CD14-positive monocyte (primary cell): ENCODE measurements at regions of chr21 and their contacts with region 1.

Region 1: GRCh38 chr21:37366482-37367316 is at the start of gene DYRK1A:
- DNase-seq: peak; percentile 97 to 100 (median 99)
- H3K4me3 ChIP-seq: peak within 1 kb of the TSS; percentile 84 to 98 (median 95)
- H3K4me3 Mint-ChIP-seq: peak within 1 kb of the TSS; percentile 97 to 100
- H3K27ac ChIP-seq: peak within 1 kb of the TSS; percentile 93 to 97
- H3K27ac Mint-ChIP-seq: peak within 1 kb of the TSS; percentile 98 to 100 (median 100)
- H3K4me1 ChIP-seq: peaks cover 34 to 46% of the 10 kb centered on the region in 2 donors
- H3K4me1 Mint-ChIP-seq: peaks cover 42% of the 10 kb centered on the region
- H3K27me3 ChIP-seq: no peaks in the 10 kb centered on the region
- H3K27me3 Mint-ChIP-seq: peaks cover 0 to 2% (median 0%) of the 10 kb centered on the region in 3 donors
- CTCF ChIP-seq: no peak
- polyA plus RNA-seq, gene DYRK1A: 1.8 to 53.5 (median 2.4) TPM

Region 2: GRCh38 chr21:37072988-37073416 is 293.7 kb before region 1 on chr21 and contains the starts of genes PIGP and TTC3:
- intact Hi-C with region 1: loop called in 1 of 2 experiments (anchors 10 kb)
- DNase-seq: peak; percentile 94 to 95 (median 94)
- H3K4me3 ChIP-seq: peak within 1 kb of the TSS; percentile 85 to 91 (median 89)
- H3K4me3 Mint-ChIP-seq: peak within 1 kb of the TSS; percentile 95 to 97
- H3K27ac ChIP-seq: peak within 1 kb of the TSS; percentile 92 to 95
- H3K27ac Mint-ChIP-seq: peak within 1 kb of the TSS; percentile 89 to 95 (median 94)
- H3K4me1 ChIP-seq: peaks cover 18 to 39% of the 10 kb centered on the region in 2 donors
- H3K4me1 Mint-ChIP-seq: peaks cover 30% of the 10 kb centered on the region
- H3K27me3 ChIP-seq: no peaks in the 10 kb centered on the region
- H3K27me3 Mint-ChIP-seq: peaks cover 0 to 4% (median 0%) of the 10 kb centered on the region in 3 donors
- CTCF ChIP-seq: no peak
- polyA plus RNA-seq, gene PIGP: 8.8 to 17.6 (median 10.6) TPM
- polyA plus RNA-seq, gene TTC3: 9.6 to 35.4 (median 17.9) TPM

Region 3: GRCh38 chr21:37292941-37293340 is 73.8 kb before region 1 on chr21:
- intact Hi-C with region 1: no loop called
- DNase-seq: no peak
- H3K4me3 ChIP-seq: no peak overlapping the region
- H3K4me3 Mint-ChIP-seq: no peak overlapping the region
- H3K27ac ChIP-seq: no peak overlapping the region
- H3K27ac Mint-ChIP-seq: no peak overlapping the region
- H3K4me1 ChIP-seq: no peaks in the 10 kb centered on the region
- H3K4me1 Mint-ChIP-seq: no peaks in the 10 kb centered on the region
- H3K27me3 ChIP-seq: no peaks in the 10 kb centered on the region
- H3K27me3 Mint-ChIP-seq: peaks cover 0 to 8% (median 3%) of the 10 kb centered on the region in 3 donors
- CTCF ChIP-seq: no peak

Region 4: DNA sequence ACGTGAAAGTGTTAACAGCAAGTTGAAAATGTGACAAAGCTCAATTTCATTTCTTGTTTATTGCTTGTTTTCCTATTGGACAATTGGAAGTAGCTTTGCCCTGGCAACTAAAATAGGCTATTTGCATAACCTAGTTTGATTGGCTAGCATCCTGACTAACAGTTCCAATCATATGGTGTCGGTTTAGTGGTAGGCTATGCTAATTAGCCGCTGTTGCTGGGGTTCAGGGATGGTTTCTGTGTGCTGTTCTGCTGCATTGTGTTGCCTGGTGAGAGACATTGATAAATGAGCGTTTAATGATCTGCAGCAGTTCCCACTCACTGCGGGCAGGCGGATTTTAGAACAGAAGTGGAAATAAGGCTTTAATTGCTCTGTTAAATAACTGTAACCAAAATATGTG is 68.4 kb after region 1 on chr21:
- intact Hi-C with region 1: loop called (anchors 5 to 10 kb)
- DNase-seq: peak; percentile 82 to 96 (median 89)
- H3K4me3 ChIP-seq: peak overlapping the region; percentile 9 to 41 (median 12)
- H3K4me3 Mint-ChIP-seq: no peak overlapping the region
- H3K27ac ChIP-seq: peak overlapping the region in 1 of 2 donors; percentile 56
- H3K27ac Mint-ChIP-seq: no peak overlapping the region
- H3K4me1 ChIP-seq: peaks cover 8 to 16% of the 10 kb centered on the region in 2 donors
- H3K4me1 Mint-ChIP-seq: peaks cover 19% of the 10 kb centered on the region
- H3K27me3 ChIP-seq: no peaks in the 10 kb centered on the region
- H3K27me3 Mint-ChIP-seq: no peaks in the 10 kb centered on the region
- CTCF ChIP-seq: no peak

Region 5: DNA sequence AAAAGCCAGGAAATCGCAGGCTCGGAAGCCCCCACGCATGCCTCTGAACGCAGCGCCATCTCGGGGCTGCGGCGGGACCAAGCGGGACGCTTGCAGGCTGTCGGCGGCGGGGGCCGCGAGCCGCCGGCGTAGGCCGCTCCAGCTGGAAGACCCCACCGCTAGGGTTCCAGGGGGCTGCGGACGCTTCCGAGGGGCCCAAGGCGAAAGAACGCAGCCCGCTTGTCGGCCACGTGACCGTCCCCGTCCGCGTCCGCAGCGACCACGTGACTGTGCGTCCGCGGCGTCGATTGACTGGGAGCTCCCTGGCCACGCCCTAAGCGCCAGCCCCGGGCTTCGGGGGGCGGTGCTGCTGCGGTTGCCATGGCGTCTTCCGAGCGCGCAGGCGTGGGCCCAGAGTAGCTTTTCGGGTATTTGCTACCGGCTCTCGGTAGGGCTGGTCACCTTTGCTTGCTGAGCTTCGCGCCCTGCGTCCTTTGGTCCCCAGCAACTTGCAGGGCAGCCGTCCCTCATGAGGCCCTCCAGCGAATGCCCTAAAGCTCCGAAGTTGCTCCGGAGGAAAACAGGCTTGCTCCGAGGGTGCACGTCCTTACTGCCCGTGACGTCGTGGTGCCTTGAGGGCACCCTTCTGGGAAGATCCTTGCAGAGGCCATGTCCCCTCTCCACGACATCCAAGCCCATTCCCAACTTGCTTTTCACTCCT is 197.1 kb after region 1 on chr21:
- intact Hi-C with region 1: loop called (anchors 2 to 5 kb)
- DNase-seq: peak; percentile 90 to 92 (median 92)
- H3K4me3 ChIP-seq: peak overlapping the region; percentile 63 to 78 (median 77)
- H3K4me3 Mint-ChIP-seq: peak overlapping the region; percentile 95 to 96
- H3K27ac ChIP-seq: peak overlapping the region; percentile 93 to 96
- H3K27ac Mint-ChIP-seq: peak overlapping the region; percentile 97 to 100 (median 99)
- H3K4me1 ChIP-seq: peaks cover 25 to 31% of the 10 kb centered on the region in 2 donors
- H3K4me1 Mint-ChIP-seq: peaks cover 24% of the 10 kb centered on the region
- H3K27me3 ChIP-seq: no peaks in the 10 kb centered on the region
- H3K27me3 Mint-ChIP-seq: peaks cover 0 to 6% (median 0%) of the 10 kb centered on the region in 3 donors
- CTCF ChIP-seq: peak; percentile 15